HCT116 (cell line): ENCODE measurements at regions of chr2 and their contacts with region 1.

Region 1: GRCh38 chr2:212548450-212548819 is 9.8 kb upstream of the ERBB4 start:
- DNase-seq: peak; percentile 28
- ATAC-seq: peak; percentile 84
- H3K4me3 ChIP-seq: no peak overlapping the region
- H3K27ac ChIP-seq: no peak overlapping the region
- H3K4me1 ChIP-seq: no peaks in the 10 kb centered on the region
- H3K27me3 ChIP-seq: no peaks in the 10 kb centered on the region
- CTCF ChIP-seq: peak; percentile 22 to 62 (median 46); a peak in 4 of 6 replicates
- POLR2A ChIP-seq: no peak
- RAD21 ChIP-seq: peak; percentile 80

Region 2: GRCh38 chr2:211085056-211085680 is 1463.3 kb before region 1 on chr2:
- CTCF ChIA-PET with region 1: no interaction called
- POLR2A ChIA-PET with region 1: no interaction called
- RAD21 ChIA-PET with region 1: no interaction called
- intact Hi-C with region 1: loop called (anchors 1 kb)
- DNase-seq: peak; percentile 44
- ATAC-seq: peak; percentile 78
- H3K4me3 ChIP-seq: no peak overlapping the region
- H3K27ac ChIP-seq: no peak overlapping the region
- H3K4me1 ChIP-seq: no peaks in the 10 kb centered on the region
- H3K27me3 ChIP-seq: no peaks in the 10 kb centered on the region
- CTCF ChIP-seq: peak; percentile 45 to 77 (median 55); a peak in 5 of 6 replicates
- POLR2A ChIP-seq: no peak
- RAD21 ChIP-seq: peak; percentile 60

Region 3: DNA sequence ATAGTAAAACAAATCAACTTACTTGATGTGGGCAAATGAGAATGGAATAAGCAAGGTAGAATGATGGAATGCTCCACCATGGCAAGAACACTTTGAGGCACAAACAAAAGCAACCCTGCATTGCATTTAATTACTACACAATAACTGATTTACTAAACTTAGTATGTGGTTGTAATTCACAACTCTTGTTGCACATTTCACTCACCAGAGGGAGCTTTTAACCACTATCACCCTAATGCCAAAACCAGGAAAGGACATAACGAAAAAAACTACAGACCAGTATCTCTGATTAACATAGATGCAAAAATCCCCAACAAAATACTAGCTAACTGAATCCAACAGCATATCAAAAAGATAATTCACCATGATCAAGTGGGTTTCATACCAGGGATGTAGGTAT is 1332.2 kb before region 1 on chr2:
- CTCF ChIA-PET with region 1: no interaction called
- POLR2A ChIA-PET with region 1: no interaction called
- RAD21 ChIA-PET with region 1: no interaction called
- intact Hi-C with region 1: loop called (anchors 10 kb)
- DNase-seq: no peak
- ATAC-seq: no peak; the same call in 1 of the 2 replicates
- H3K4me3 ChIP-seq: no peak overlapping the region
- H3K27ac ChIP-seq: no peak overlapping the region
- H3K4me1 ChIP-seq: no peaks in the 10 kb centered on the region
- H3K27me3 ChIP-seq: no peaks in the 10 kb centered on the region
- CTCF ChIP-seq: peak; percentile 28 to 53 (median 43); a peak in 5 of 6 replicates
- POLR2A ChIP-seq: no peak
- RAD21 ChIP-seq: peak; percentile 51

Region 4: DNA sequence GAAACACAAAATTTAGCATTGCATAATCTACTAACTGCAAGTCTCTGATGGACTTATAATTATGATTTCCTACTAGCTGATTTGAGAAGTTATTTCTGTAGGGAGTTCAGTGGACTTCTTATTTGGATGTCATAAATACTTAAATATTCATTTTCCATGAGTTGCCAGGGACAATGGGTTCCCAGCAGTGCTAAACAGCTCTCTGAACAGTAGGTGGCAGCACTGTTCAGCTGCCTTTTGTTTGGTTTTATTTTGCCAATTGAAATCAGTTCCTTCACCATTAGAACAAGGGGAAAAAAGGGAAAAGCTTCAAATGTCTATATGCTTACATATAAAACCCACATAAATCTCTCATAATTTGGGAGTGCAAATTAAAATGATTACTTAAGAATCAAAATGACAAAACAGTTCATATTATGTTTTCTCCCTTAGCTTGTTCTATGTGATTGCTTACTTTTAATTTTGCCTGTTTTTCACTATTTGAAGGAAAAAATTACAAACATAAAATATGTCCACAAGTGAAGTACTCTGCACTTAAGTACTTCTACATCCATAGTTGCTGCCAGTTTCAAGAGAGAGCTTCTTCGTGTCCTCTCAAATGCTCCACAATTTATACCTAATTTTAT is 1093.1 kb before region 1 on chr2:
- CTCF ChIA-PET with region 1: no interaction called
- POLR2A ChIA-PET with region 1: no interaction called
- RAD21 ChIA-PET with region 1: interaction called in 1 of 2 experiments, 3 read pairs
- intact Hi-C with region 1: loop called (anchors 2 kb)
- DNase-seq: peak; percentile 39
- ATAC-seq: peak; percentile 82
- H3K4me3 ChIP-seq: no peak overlapping the region
- H3K27ac ChIP-seq: no peak overlapping the region
- H3K4me1 ChIP-seq: no peaks in the 10 kb centered on the region
- H3K27me3 ChIP-seq: no peaks in the 10 kb centered on the region
- CTCF ChIP-seq: peak; percentile 47 to 96 (median 94); a peak in 5 of 6 replicates
- POLR2A ChIP-seq: no peak
- RAD21 ChIP-seq: peak; percentile 58

Region 5: GRCh38 chr2:211745295-211746097 is 802.9 kb before region 1 on chr2:
- CTCF ChIA-PET with region 1: interaction called, 3 read pairs
- POLR2A ChIA-PET with region 1: no interaction called
- RAD21 ChIA-PET with region 1: no interaction called
- intact Hi-C with region 1: loop called (anchors 1 kb)
- DNase-seq: peak; percentile 51
- ATAC-seq: peak; percentile 95
- H3K4me3 ChIP-seq: no peak overlapping the region
- H3K27ac ChIP-seq: no peak overlapping the region
- H3K4me1 ChIP-seq: no peaks in the 10 kb centered on the region
- H3K27me3 ChIP-seq: no peaks in the 10 kb centered on the region
- CTCF ChIP-seq: peak; percentile 70 to 90 (median 88)
- POLR2A ChIP-seq: no peak
- RAD21 ChIP-seq: peak; percentile 85

Region 6: GRCh38 chr2:212595037-212595654 is 46.7 kb after region 1 on chr2:
- CTCF ChIA-PET with region 1: no interaction called
- POLR2A ChIA-PET with region 1: no interaction called
- RAD21 ChIA-PET with region 1: no interaction called
- intact Hi-C with region 1: no loop called
- DNase-seq: peak; percentile 32
- ATAC-seq: peak; percentile 78
- H3K4me3 ChIP-seq: no peak overlapping the region
- H3K27ac ChIP-seq: no peak overlapping the region
- H3K4me1 ChIP-seq: no peaks in the 10 kb centered on the region
- H3K27me3 ChIP-seq: no peaks in the 10 kb centered on the region
- CTCF ChIP-seq: peak; percentile 27 to 58 (median 36); a peak in 4 of 6 replicates
- POLR2A ChIP-seq: no peak
- RAD21 ChIP-seq: peak; percentile 64

Region 7: GRCh38 chr2:212727751-212728150 is 179.3 kb after region 1 on chr2:
- CTCF ChIA-PET with region 1: no interaction called
- POLR2A ChIA-PET with region 1: no interaction called
- RAD21 ChIA-PET with region 1: no interaction called
- intact Hi-C with region 1: no loop called
- DNase-seq: no peak
- ATAC-seq: no peak
- H3K4me3 ChIP-seq: no peak overlapping the region
- H3K27ac ChIP-seq: no peak overlapping the region
- H3K4me1 ChIP-seq: peaks cover 0 to 9% of the 10 kb centered on the region in 2 experiments; a peak in 2 of 4 replicates
- H3K27me3 ChIP-seq: no peaks in the 10 kb centered on the region
- CTCF ChIP-seq: no peak
- POLR2A ChIP-seq: no peak
- RAD21 ChIP-seq: no peak

Region 8: DNA sequence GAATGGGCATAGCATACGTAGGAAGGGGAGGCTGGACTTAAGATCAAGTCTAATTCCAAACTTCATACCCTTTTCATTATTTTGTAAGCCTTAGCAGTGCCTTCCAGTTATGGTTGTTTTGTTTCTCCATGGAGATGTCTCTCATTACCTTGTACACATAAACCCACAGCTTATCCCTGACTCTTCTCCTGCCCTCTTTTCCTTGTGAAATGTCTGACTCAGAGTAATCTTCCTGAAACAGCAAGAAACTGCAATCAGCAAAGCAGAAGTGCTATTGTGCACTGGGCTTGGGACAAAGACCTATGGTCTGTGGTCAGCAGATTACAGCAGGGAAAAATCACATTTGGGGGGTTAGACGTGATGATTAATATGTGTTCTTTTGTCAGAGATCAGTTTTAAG is 426.3 kb after region 1 on chr2:
- CTCF ChIA-PET with region 1: no interaction called
- POLR2A ChIA-PET with region 1: no interaction called
- RAD21 ChIA-PET with region 1: no interaction called
- intact Hi-C with region 1: no loop called
- DNase-seq: no peak
- ATAC-seq: no peak
- H3K4me3 ChIP-seq: no peak overlapping the region
- H3K27ac ChIP-seq: no peak overlapping the region
- H3K4me1 ChIP-seq: no peaks in the 10 kb centered on the region
- H3K27me3 ChIP-seq: no peaks in the 10 kb centered on the region
- CTCF ChIP-seq: no peak
- POLR2A ChIP-seq: no peak
- RAD21 ChIP-seq: no peak